Right ventricle myocardium inferior (tissue), 1 donor: ENCODE measurements at regions of chr4 and their contacts with region 1.

Region 1: GRCh38 chr4:90293320-90293719 is 166.1 kb downstream of the CCSER1 start:
- DNase-seq: no peak
- ATAC-seq: no peak

Region 2: DNA sequence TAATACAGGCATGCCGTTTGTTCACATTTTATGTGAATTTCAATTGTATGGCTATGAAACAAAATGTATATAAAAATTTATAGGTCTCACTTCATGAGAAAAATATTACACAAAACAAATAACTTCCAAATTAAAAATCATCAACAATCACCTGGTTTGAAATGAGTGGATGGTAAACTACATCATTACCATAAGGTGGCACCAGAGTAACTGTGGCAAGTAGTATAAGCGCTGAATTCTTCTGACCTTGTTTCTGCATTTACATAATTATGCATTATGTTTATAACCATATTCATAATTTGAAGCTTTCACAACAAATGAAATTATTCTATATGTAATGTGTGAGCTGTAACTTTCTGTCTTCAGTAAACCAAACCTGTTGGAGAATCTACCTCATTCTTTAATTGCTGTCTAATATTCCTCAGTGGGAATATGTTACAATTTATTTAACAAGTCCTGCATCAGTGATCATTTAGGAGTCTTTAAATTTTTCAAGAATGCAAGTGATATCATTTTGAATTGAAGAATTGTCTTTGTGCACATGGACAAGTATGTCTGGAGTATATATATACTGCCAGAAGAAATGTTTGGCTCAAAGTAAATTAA is 343.4 kb before region 1 on chr4:
- intact Hi-C with region 1: loop called (anchors 5 kb)
- DNase-seq: no peak
- ATAC-seq: no peak

Region 3: GRCh38 chr4:90025248-90025647 is 268.1 kb before region 1 on chr4:
- intact Hi-C with region 1: loop called (anchors 10 kb)
- DNase-seq: no peak
- ATAC-seq: no peak

Region 4: DNA sequence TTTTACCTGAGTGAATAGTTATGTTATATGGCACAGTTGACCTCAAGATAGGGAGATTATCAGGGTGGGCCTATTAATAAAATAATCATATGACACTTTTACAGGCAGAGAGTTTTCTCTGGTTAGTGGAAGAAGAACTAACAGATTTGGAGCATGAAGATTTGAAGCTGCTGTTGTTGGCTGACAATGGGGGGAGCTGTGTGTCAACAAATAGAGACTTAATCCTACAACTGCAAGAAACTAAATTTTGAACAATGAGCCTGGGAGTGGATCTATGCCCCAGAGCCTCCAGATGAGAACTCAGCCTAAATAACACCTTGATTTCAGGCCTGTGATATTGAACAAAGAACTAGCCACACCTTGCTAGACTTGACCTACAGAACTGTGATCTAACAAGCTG is 173.3 kb before region 1 on chr4:
- intact Hi-C with region 1: loop called (anchors 2 kb)
- DNase-seq: no peak
- ATAC-seq: no peak

Region 5: DNA sequence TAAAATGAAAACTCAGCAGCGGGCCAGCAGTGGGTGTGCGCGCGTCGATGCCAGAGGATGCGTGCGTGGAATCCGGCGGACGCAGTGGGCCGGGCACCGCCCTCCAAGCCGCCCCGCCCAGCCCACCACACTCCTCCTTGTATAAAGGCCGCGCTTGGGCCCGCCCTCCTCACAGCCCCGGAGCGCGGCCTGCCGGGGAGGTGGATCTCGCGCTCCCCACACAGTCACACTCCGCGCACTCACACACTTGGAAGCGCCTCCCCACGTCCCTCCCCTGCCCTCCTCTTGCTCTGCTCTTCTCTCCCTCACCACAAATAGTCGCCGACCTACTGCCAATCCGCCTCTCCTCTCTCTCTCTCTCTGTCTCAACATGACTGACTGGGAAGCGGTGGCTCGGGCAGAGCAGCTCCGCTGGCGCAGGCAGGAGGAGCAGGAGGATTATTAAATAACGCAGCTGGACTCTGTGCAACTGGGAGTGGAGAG is 166.1 kb before region 1 on chr4 and contains the start of gene CCSER1:
- intact Hi-C with region 1: loop called (anchors 2 kb)
- DNase-seq: peak; percentile 90
- ATAC-seq: peak; percentile 97
- total RNA-seq, gene CCSER1: 12.9 TPM